GM12878 (cell line): ENCODE measurements at regions of chr16 and their contacts with region 1.

Region 1: GRCh38 chr16:85986931-85987749 is 88.2 kb downstream of the IRF8 start:
- DNase-seq: no peak
- ATAC-seq: peak; percentile 52
- H3K4me3 ChIP-seq: peak overlapping the region; percentile 41; the same call in 1 of the 2 replicates
- H3K27ac ChIP-seq: peak overlapping the region; percentile 100
- H3K4me1 ChIP-seq: peaks cover 89% of the 10 kb centered on the region
- H3K27me3 ChIP-seq: no peaks in the 10 kb centered on the region
- CTCF ChIP-seq: peak; percentile 9 to 53 (median 34); a peak in 5 of 6 replicates
- EP300 ChIP-seq: no peak
- POLR2A ChIP-seq: no peak
- RAD21 ChIP-seq: peak; percentile 60

Region 2: DNA sequence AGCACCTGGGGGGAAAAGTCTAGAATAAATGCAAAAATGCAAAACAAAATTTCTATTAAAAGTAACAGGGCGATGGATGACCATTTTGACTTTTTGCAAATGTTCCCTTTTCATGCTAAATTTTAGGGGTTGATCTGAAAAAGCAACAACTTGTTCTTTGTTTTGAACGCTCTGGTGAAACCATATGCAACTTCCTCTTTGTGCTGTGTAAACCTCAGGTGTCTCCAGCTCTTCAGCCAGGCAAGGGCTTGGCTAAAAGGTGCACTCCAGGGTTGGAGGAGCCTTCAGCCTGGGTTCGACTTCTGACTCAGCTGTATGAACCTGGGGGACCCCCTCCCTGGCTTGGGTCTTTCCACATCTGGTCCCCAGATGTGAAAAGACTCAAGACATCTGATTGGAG is 78.7 kb before region 1 on chr16:
- CTCF ChIA-PET with region 1: interaction called, 205 read pairs
- POLR2A ChIA-PET with region 1: interaction called, 28 read pairs
- RAD21 ChIA-PET with region 1: interaction called, 173 read pairs
- SMC1A ChIA-PET with region 1: interaction called, 289 read pairs
- in situ Hi-C with region 1: no loop called
- intact Hi-C with region 1: loop called (anchors 2 kb)
- DNase-seq: peak; percentile 59
- ATAC-seq: peak; percentile 61
- H3K4me3 ChIP-seq: peak overlapping the region; percentile 41
- H3K27ac ChIP-seq: peak overlapping the region; percentile 45
- H3K4me1 ChIP-seq: peaks cover 83% of the 10 kb centered on the region
- H3K27me3 ChIP-seq: no peaks in the 10 kb centered on the region
- CTCF ChIP-seq: no peak
- EP300 ChIP-seq: 0 out of 4 replicates have a peak, but pooled peaks of 1 of the 2 experiments have one; percentile 1
- POLR2A ChIP-seq: peak; percentile 48
- RAD21 ChIP-seq: no peak

Region 3: GRCh38 chr16:85935974-85936760 is 51.0 kb before region 1 on chr16:
- CTCF ChIA-PET with region 1: interaction called, 20 read pairs
- POLR2A ChIA-PET with region 1: no interaction called
- RAD21 ChIA-PET with region 1: interaction called, 45 read pairs
- SMC1A ChIA-PET with region 1: interaction called, 23 read pairs
- in situ Hi-C with region 1: no loop called
- intact Hi-C with region 1: no loop called
- DNase-seq: peak; percentile 89
- ATAC-seq: peak; percentile 93
- H3K4me3 ChIP-seq: peak overlapping the region; percentile 36; the same call in 1 of the 2 replicates
- H3K27ac ChIP-seq: peak overlapping the region; percentile 97
- H3K4me1 ChIP-seq: peaks cover 54% of the 10 kb centered on the region
- H3K27me3 ChIP-seq: no peaks in the 10 kb centered on the region
- CTCF ChIP-seq: peak in 2 of 3 experiments; percentile 5 to 6; a peak in 2 of 6 replicates
- EP300 ChIP-seq: peak; percentile 74 to 82; a peak in 2 of 4 replicates
- POLR2A ChIP-seq: 0 out of 2 replicates have a peak, but pooled peaks have one; percentile 19
- RAD21 ChIP-seq: peak; percentile 26; the same call in 1 of the 2 replicates

Region 4: DNA sequence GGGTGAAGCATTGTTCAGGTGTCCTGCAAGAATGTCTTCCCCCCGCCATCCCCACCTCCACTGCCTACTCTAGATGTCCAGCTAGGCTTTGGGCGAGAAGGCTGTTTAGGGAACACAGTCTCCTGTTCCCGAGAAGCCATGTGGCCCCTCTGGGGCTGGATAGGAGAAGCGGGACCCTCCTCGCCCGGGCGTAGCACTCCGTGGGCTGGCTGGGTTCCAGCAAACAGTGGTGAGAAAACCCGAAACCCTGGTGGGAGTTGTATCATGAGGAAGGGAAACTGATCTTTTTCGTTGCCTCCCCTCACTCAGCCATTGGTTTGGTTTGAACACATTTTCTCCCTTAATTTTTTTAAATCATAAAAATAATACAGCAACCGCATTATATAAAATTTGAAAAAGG is 31.6 kb before region 1 on chr16:
- CTCF ChIA-PET with region 1: interaction called, 5 read pairs
- POLR2A ChIA-PET with region 1: no interaction called
- RAD21 ChIA-PET with region 1: interaction called, 8 read pairs
- SMC1A ChIA-PET with region 1: interaction called, 16 read pairs
- in situ Hi-C with region 1: no loop called
- intact Hi-C with region 1: no loop called
- DNase-seq: no peak
- ATAC-seq: peak; percentile 75
- H3K4me3 ChIP-seq: no peak overlapping the region
- H3K27ac ChIP-seq: peak overlapping the region; percentile 20; the same call in 1 of the 2 replicates
- H3K4me1 ChIP-seq: peaks cover 31% of the 10 kb centered on the region
- H3K27me3 ChIP-seq: no peaks in the 10 kb centered on the region
- CTCF ChIP-seq: no peak
- EP300 ChIP-seq: no peak; a peak in 1 of 4 replicates
- POLR2A ChIP-seq: no peak
- RAD21 ChIP-seq: no peak

Region 5: DNA sequence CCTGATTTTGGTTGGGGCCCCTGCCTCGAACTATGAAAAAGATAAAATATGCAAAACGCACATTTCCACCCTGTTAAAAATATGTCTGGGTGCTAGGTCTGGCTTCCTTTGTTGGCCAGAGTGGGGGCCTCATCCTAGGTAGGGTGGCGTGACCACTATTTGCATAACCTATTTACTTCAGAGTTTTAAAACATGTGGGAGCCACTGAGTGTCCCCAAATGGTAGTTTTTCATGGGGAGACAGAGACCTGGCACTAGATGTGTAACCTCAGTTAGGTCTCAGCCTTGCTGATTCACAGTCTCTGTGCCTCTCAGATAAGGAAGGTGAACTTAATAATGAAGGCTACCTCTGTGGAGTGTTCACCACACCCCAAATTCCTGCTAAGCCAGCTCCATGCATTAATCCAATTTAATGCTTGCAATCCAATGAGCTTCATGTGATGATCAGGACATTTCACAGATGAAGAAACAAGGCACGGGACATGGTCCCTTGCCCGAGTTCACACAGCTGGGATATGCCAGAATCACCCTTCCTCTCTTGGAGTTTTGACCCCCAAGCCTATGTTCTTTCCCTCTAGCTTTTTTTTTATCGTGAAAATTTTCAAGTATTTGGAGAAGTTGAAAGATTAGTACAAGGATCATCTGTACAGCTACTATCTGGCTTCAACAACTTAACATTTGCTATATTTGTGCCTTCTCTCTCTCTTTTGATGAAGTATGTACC is 15.2 kb after region 1 on chr16:
- CTCF ChIA-PET with region 1: interaction called, 100 read pairs
- POLR2A ChIA-PET with region 1: interaction called, 12 read pairs
- RAD21 ChIA-PET with region 1: interaction called, 157 read pairs
- SMC1A ChIA-PET with region 1: interaction called, 338 read pairs
- in situ Hi-C with region 1: no loop called
- intact Hi-C with region 1: no loop called
- DNase-seq: peak; percentile 76
- ATAC-seq: peak; percentile 85
- H3K4me3 ChIP-seq: no peak overlapping the region
- H3K27ac ChIP-seq: peak overlapping the region; percentile 81
- H3K4me1 ChIP-seq: peaks cover 49% of the 10 kb centered on the region
- H3K27me3 ChIP-seq: no peaks in the 10 kb centered on the region
- CTCF ChIP-seq: no peak
- EP300 ChIP-seq: no peak
- POLR2A ChIP-seq: peak; percentile 59
- RAD21 ChIP-seq: 0 out of 2 replicates have a peak, but pooled peaks have one; percentile 2

Region 6: GRCh38 chr16:86016201-86016871 is 29.2 kb after region 1 on chr16:
- CTCF ChIA-PET with region 1: interaction called, 100 read pairs
- POLR2A ChIA-PET with region 1: interaction called, 16 read pairs
- RAD21 ChIA-PET with region 1: interaction called, 157 read pairs
- SMC1A ChIA-PET with region 1: interaction called, 338 read pairs
- in situ Hi-C with region 1: no loop called
- intact Hi-C with region 1: loop called (anchors 1 kb)
- DNase-seq: peak; percentile 59
- ATAC-seq: peak; percentile 75
- H3K4me3 ChIP-seq: no peak overlapping the region
- H3K27ac ChIP-seq: no peak overlapping the region
- H3K4me1 ChIP-seq: peaks cover 20% of the 10 kb centered on the region
- H3K27me3 ChIP-seq: no peaks in the 10 kb centered on the region
- CTCF ChIP-seq: peak; percentile 69 to 90 (median 79)
- EP300 ChIP-seq: no peak
- POLR2A ChIP-seq: no peak
- RAD21 ChIP-seq: peak; percentile 99